ENCODE measurements at regions of chr10 and their contacts with region 1.

Region 1: DNA sequence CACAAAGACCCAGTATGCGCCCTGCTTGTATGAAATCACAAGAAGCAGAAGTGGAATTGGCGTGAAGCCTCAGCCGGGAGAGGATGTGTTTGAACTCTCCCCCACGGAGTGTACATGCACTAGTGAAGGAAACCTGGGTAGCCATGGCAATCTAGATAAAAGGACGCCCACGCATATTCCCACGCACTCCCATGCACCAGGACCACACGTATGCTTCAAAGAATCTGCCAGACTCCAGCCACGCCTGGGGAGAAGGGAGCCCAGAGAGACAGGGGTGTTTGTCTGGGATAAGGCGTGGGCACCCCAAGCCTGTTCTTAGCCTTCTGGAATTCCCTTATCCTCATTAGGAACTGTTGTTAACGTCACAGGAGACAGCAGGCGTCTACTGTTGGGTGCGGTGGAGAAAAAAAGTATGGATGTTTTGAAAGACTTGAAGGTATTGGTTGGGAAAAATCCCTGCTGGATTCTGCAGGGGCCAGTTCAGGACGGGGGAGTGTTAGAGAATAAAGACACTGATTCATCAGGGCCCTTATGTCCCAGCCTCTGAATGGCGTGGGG is 28.9 kb upstream of the ECHDC3 start:
- DNase-seq: no peak
- H3K4me3 Mint-ChIP-seq: no peak overlapping the region
- H3K27ac Mint-ChIP-seq: no peak overlapping the region
- H3K4me1 Mint-ChIP-seq: peaks cover 8% of the 10 kb centered on the region
- H3K27me3 Mint-ChIP-seq: peaks cover 76% of the 10 kb centered on the region

Region 2: GRCh38 chr10:11578802-11579255 is 134.4 kb before region 1 on chr10:
- intact Hi-C with region 1: loop called (anchors 1 kb)
- DNase-seq: no peak
- H3K4me3 Mint-ChIP-seq: no peak overlapping the region
- H3K27ac Mint-ChIP-seq: no peak overlapping the region
- H3K4me1 Mint-ChIP-seq: peaks cover 22% of the 10 kb centered on the region
- H3K27me3 Mint-ChIP-seq: peaks cover 11% of the 10 kb centered on the region

Region 3: DNA sequence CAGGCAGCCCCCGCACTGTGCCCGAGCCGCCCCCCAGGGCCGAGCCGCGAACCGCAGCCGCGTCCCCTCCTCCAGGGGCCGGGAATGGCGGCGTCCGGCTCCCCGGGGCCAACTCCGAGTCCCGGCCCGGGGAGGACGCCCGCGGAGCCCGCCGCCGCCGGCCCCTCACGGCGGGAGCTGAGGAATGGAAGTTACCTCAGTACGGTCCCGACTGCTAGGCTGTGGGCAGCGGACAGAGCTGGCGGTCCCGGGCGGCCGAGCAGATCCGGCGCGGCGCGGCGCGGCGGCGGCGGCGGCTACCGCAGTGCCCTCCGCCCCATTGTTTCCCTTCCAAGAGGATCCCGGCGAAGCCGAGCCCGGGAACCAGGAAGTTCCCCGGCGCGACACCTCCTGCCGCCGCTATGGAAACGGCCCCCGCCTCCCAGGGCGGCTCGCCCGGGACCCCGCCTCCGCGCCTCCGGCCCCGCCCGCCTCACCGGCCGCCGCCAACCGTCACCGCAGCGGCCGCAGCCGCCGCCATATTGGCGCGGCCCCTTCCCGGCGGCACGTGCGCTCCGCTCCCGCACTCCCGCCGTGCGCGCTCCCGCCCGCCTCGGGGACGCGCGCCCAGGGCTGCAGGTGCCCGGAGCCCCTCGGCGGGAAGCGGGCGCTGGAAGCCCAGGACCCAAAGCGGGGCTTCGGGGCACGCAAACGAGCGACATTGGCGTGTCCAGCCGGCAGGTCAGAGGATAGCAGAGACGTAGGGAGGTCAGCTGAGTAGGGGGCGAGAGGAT is 101.8 kb before region 1 on chr10 and contains the start of gene USP6NL:
- intact Hi-C with region 1: loop called (anchors 2 kb)
- DNase-seq: peak; percentile 48
- H3K4me3 Mint-ChIP-seq: peak within 1 kb of the TSS; percentile 89
- H3K27ac Mint-ChIP-seq: peak within 1 kb of the TSS; percentile 52
- H3K4me1 Mint-ChIP-seq: peaks cover 27% of the 10 kb centered on the region
- H3K27me3 Mint-ChIP-seq: peaks cover 44% of the 10 kb centered on the region
- total RNA-seq, gene USP6NL: 0.64 and 0.78 TPM in 2 replicates

Region 4: DNA sequence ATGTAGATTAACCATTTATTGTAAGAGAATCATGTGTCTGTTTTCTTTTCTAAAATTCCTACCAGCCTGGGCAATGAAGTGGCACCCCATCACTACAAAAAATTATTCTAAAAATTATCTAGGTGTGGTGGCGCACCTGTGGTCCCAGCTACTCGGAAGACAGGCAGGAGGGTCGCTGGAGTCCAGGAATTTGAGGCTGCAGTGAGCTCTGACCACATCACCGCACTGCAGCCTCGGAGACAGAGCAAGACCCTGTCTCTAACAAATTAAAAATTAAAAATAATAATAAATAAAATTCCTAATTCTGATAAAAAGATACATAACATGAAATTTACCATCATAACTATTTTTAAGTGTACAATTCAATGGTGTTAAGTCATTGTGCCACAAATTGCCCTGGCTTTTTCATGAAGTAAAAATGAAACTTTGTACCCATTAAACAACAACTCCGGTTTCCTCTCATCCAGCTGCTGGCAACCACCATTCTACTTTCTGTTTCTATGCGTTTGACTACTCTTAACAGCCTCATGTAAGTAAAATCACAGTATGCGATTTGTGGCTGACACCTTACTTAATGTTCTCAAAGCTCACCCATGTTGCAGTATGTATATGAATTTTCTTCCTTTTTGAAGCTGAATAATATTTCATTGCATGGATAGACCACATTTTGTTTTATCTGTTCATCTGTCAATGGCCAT is 81.2 kb before region 1 on chr10:
- intact Hi-C with region 1: loop called (anchors 1 kb)
- DNase-seq: peak; percentile 27
- H3K4me3 Mint-ChIP-seq: peak overlapping the region; percentile 24
- H3K27ac Mint-ChIP-seq: peak overlapping the region; percentile 59
- H3K4me1 Mint-ChIP-seq: peaks cover 19% of the 10 kb centered on the region
- H3K27me3 Mint-ChIP-seq: peaks cover 39% of the 10 kb centered on the region

Region 5: GRCh38 chr10:11684717-11685645 is 28.3 kb before region 1 on chr10:
- intact Hi-C with region 1: loop called (anchors 1 kb)
- DNase-seq: peak; percentile 39
- H3K4me3 Mint-ChIP-seq: peak overlapping the region; percentile 76
- H3K27ac Mint-ChIP-seq: peak overlapping the region; percentile 84
- H3K4me1 Mint-ChIP-seq: peaks cover 25% of the 10 kb centered on the region
- H3K27me3 Mint-ChIP-seq: peaks cover 53% of the 10 kb centered on the region

Region 6: DNA sequence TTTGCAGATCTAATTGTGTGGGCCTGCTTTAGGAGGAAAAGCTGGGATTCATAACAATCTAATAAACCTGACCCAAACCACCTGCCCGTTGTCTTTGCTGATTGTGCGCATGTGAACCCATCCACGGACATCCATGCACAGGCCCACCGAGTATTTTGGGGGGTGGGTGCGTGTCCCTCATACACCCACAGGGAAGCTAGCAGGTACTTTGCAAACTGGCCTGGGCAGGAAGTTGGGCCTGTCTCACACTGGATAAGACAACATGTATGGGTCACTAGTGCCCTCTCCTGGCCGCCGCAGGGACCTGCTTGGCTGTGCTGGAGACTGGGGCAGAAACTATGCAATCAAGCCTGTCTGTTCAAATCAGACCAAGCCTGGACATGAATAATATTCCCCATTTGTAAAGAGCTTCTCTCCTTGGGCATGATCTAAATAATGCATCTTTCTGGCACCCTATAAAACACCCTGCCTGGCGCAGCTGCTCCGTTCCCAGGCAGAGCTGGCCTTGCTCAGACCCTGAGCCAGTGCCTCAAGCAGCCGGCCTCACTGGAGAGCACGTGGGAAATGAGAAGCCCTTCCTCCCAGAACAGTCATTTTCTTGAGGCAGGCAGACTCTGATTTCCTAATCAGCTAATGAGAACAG is 44.7 kb after region 1 on chr10:
- intact Hi-C with region 1: loop called (anchors 2 kb)
- DNase-seq: peak; percentile 69
- H3K4me3 Mint-ChIP-seq: no peak overlapping the region
- H3K27ac Mint-ChIP-seq: no peak overlapping the region
- H3K4me1 Mint-ChIP-seq: no peaks in the 10 kb centered on the region
- H3K27me3 Mint-ChIP-seq: peaks cover 14% of the 10 kb centered on the region

Region 7: GRCh38 chr10:11863353-11864109 is 150.3 kb after region 1 on chr10:
- intact Hi-C with region 1: loop called (anchors 1 kb)
- DNase-seq: peak; percentile 74
- H3K4me3 Mint-ChIP-seq: peak overlapping the region; percentile 41
- H3K27ac Mint-ChIP-seq: peak overlapping the region; percentile 52
- H3K4me1 Mint-ChIP-seq: peaks cover 20% of the 10 kb centered on the region
- H3K27me3 Mint-ChIP-seq: peaks cover 70% of the 10 kb centered on the region